Right cardiac atrium (tissue), 5 donors: ENCODE measurements at regions of chr1 and their contacts with region 1.

Region 1: GRCh38 chr1:235253219-235253962 is 74.6 kb downstream of the ARID4B start:
- DNase-seq: peak in 2 of 3 donors; percentile 48 to 54
- ATAC-seq: peak; percentile 93
- H3K4me3 ChIP-seq: no peak overlapping the region
- H3K27ac ChIP-seq: no peak overlapping the region
- H3K4me1 ChIP-seq: no peaks in the 10 kb centered on the region
- H3K27me3 ChIP-seq: no peaks in the 10 kb centered on the region

Region 2: GRCh38 chr1:235122348-235122747 is 131.0 kb before region 1 on chr1:
- intact Hi-C with region 1: no loop called
- DNase-seq: no peak
- ATAC-seq: no peak
- H3K4me3 ChIP-seq: no peak overlapping the region
- H3K27ac ChIP-seq: no peak overlapping the region
- H3K4me1 ChIP-seq: peaks cover 2% of the 10 kb centered on the region
- H3K27me3 ChIP-seq: no peaks in the 10 kb centered on the region

Region 3: DNA sequence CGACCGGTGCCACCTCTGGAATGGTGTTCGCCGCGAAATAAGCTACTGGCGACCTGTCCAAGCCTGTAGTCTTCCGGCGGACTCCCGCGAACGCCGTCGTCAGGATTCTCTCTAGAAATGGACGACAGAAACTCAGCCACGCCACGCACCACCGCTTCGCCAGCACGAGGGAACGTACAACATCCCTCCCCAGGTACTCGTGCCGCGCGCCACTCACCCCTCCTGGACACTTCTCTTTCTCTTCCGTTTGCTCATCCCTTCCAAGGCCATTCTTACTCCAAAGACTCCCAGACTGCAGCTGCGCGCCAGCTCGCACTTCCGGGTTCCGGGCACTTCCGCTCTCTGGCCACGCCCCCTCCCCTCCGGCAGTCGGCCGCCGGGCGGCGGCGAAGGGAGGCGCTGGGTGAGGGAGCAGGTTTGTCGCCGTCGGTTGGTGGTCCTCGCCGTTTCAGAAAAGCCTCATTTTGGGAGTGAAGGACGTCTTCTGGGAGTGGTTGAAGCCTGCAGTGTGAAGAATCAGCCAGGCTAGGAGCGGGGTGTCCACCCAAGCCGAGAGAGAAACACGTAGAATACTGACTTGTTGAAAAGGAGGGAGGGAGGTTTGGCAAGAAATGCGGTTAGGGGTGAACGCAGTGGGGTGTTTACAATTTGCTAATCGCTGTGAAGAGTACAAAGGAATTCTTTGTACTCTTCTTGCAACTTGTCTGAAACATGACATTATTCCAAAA is 92.3 kb before region 1 on chr1 and contains the start of gene RBM34:
- intact Hi-C with region 1: no loop called
- DNase-seq: peak; percentile 92 to 97 (median 97)
- ATAC-seq: peak; percentile 98
- H3K4me3 ChIP-seq: peak within 1 kb of the TSS; percentile 73
- H3K27ac ChIP-seq: peak within 1 kb of the TSS; percentile 97
- H3K4me1 ChIP-seq: peaks cover 6% of the 10 kb centered on the region
- H3K27me3 ChIP-seq: no peaks in the 10 kb centered on the region
- total RNA-seq, gene RBM34: 44.8 to 57.4 (median 53.8) TPM

Region 4: DNA sequence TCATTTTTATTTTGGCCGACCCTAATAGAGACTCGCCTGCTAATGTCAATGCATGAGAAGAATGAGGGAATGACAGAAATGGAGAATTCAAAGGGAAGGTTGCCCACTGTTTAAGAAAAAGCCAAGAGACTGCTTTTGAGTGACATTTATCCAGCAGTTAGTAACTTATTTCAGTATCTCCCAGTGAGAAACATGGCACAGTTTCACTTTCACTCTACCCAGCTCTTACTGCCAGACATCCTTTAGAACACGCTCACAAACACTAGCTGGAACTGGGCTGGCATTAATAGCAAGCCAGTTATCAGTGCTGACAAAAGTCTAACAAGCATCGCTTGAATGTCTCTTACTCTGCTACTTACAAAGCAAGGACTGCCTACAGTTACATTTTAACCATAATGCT is 83.5 kb after region 1 on chr1:
- intact Hi-C with region 1: loop called in 1 of 4 experiments (anchors 10 kb)
- DNase-seq: no peak
- ATAC-seq: peak; percentile 78 to 89
- H3K4me3 ChIP-seq: no peak overlapping the region
- H3K27ac ChIP-seq: no peak overlapping the region
- H3K4me1 ChIP-seq: no peaks in the 10 kb centered on the region
- H3K27me3 ChIP-seq: no peaks in the 10 kb centered on the region

Region 5: GRCh38 chr1:235415008-235415904 is 161.9 kb after region 1 on chr1:
- intact Hi-C with region 1: loop called (anchors 2 to 5 kb)
- DNase-seq: peak; percentile 56 to 81 (median 69)
- ATAC-seq: peak; percentile 75 to 78
- H3K4me3 ChIP-seq: no peak overlapping the region
- H3K27ac ChIP-seq: no peak overlapping the region
- H3K4me1 ChIP-seq: no peaks in the 10 kb centered on the region
- H3K27me3 ChIP-seq: no peaks in the 10 kb centered on the region

Region 6: GRCh38 chr1:235421751-235422150 is 168.4 kb after region 1 on chr1:
- intact Hi-C with region 1: loop called in 3 of 4 experiments (anchors 2 to 5 kb)
- DNase-seq: no peak
- ATAC-seq: no peak
- H3K4me3 ChIP-seq: no peak overlapping the region
- H3K27ac ChIP-seq: no peak overlapping the region
- H3K4me1 ChIP-seq: no peaks in the 10 kb centered on the region
- H3K27me3 ChIP-seq: no peaks in the 10 kb centered on the region